ENCODE measurements at regions of chr12 and their contacts with region 1.

Region 1: DNA sequence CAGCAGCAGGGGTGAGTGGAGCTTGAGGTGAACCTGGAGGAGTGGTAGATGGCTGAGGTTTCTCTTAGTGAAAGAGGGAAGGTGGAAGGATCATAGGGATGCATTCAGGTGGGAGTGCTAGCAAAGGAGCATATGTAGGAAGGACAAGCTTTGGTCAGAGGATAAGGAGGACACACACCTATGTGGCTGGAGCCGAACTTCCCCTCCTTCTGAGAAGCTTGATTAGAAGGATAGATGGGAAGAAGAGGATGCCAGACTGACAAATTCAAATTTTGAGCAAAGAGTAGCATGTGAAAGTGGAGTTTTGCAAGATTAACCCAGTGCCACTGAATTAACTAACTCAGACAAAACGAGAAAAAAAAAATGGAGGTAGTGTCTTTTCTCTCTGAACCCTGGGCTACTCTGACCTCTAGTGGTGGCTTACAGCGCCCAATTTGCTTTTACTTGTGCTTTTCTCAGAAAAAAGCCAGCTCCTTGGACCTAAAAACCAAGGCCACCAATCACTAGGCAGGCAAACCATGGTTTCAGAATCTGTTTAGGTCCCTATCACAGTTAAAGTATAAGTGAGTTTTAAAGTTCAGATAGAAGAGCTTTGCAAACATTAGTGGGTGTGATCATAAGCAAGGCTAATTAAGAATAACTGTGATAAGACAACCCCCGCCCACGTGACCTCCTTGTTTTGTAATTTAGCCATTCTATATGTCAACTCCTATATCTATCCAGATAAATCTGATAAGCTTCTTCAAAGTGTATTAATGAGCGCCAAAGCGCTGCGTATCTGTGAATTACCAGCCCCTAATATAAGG is 15.5 kb downstream of the EMP1 start:
- DNase-seq: peak; percentile 84
- ATAC-seq: peak; percentile 72
- H3K4me3 Mint-ChIP-seq: no peak overlapping the region
- H3K27ac Mint-ChIP-seq: peak overlapping the region; percentile 60
- H3K4me1 Mint-ChIP-seq: peaks cover 55% of the 10 kb centered on the region
- H3K27me3 Mint-ChIP-seq: no peaks in the 10 kb centered on the region

Region 2: DNA sequence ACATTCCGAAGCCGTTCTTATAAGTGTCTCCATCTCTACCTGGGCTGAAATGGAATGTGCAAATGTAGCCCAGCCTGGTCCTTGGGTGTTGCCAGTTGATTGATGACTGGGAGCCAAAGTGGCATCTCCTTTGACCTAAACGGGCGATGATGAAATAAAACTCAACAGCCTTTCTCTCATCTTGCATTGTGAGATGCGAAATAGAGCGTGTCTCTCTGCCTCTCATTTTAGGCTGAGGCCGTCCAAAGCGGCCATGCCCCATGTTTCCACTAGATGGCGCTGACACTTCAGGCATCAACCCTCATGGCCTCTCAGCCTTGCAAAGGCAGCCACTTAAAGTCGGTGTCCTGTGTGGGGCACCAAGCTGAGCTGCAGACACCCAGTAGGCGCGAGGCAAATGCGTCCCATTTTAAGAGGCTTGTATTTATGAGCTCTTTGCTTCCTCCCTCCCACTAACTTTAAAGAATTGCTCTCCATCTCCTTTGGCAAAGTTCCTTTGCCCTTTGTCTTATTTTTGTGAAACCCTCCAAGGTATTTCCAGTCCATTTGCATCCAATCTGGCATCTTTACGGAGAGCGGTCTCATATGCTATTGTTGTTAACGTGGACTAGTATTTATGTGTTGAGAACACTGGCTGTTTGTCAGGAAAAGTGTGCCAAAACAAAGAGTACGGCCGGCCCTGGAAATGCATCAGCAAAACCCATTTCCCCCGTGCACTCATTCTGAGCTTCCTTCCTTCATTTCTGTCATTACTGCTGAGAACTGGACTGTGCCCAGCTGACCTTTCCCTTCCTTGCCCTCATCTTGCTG is 295.7 kb before region 1 on chr12:
- CTCF ChIA-PET with region 1: interaction called, 62 read pairs
- DNase-seq: peak; percentile 91
- ATAC-seq: peak; percentile 99
- H3K4me3 Mint-ChIP-seq: no peak overlapping the region
- H3K27ac Mint-ChIP-seq: no peak overlapping the region
- H3K4me1 Mint-ChIP-seq: peaks cover 10% of the 10 kb centered on the region
- H3K27me3 Mint-ChIP-seq: peaks cover 35% of the 10 kb centered on the region

Region 3: DNA sequence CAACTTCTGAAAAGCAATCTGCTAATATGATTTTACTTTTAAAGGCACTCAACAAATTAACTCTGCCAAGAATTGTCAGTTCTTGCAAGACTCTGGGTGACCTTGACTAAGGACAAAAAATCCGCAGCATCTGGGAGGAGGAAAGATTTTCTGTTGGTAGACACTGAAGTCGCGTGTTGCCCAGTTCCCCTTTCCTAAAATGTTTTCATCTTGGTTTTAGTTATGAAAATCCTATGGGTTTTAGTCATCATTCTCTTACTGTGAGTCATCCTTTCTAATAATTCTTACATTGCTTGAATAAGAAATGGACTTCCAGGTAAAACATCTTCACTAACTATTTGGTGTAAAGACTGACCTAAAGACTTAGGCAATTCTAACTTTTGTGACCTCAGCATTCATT is 117.7 kb before region 1 on chr12:
- CTCF ChIA-PET with region 1: interaction called, 148 read pairs
- DNase-seq: no peak
- ATAC-seq: no peak
- H3K4me3 Mint-ChIP-seq: no peak overlapping the region
- H3K27ac Mint-ChIP-seq: no peak overlapping the region
- H3K4me1 Mint-ChIP-seq: peaks cover 24% of the 10 kb centered on the region
- H3K27me3 Mint-ChIP-seq: peaks cover 12% of the 10 kb centered on the region

Region 4: DNA sequence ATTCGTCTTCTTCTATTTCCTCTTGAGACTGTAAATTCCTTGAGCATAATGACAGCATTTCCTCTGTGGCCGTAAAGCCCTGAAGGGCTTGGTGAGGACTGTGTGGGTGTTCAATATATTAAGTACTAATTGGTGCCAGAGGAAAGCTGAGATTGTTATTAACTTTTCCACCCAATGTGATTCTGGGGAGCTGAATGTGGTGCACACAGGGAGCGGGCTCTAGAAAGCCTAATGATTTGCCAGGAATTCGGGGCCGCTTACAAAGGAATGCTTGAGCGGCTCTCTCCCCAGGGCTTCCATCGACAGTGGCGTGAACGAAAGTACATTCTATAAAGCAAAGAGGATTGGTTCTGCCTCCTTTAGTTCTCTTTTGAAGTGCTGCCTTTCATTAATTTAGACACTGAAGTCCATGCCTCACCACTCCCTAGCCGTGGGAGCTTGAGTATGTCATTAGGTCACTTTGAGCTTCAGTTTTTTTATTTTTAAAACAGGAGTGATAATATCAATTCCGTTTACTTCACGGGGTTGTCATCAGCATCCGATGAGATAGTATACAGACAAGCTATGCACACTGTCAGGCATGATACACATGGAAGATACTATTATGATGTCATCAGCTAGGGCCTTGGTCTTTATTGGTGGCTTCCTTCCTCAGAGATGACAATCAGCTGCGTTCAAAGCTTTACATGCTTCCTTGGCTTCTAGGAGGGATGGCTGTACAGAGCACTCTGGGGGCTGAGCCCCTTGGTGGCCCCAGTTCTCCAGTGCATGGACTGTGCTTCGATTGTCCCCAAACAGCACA is 97.6 kb before region 1 on chr12:
- CTCF ChIA-PET with region 1: interaction called, 12 read pairs
- DNase-seq: no peak
- ATAC-seq: no peak
- H3K4me3 Mint-ChIP-seq: no peak overlapping the region
- H3K27ac Mint-ChIP-seq: no peak overlapping the region
- H3K4me1 Mint-ChIP-seq: no peaks in the 10 kb centered on the region
- H3K27me3 Mint-ChIP-seq: peaks cover 34% of the 10 kb centered on the region

Region 5: DNA sequence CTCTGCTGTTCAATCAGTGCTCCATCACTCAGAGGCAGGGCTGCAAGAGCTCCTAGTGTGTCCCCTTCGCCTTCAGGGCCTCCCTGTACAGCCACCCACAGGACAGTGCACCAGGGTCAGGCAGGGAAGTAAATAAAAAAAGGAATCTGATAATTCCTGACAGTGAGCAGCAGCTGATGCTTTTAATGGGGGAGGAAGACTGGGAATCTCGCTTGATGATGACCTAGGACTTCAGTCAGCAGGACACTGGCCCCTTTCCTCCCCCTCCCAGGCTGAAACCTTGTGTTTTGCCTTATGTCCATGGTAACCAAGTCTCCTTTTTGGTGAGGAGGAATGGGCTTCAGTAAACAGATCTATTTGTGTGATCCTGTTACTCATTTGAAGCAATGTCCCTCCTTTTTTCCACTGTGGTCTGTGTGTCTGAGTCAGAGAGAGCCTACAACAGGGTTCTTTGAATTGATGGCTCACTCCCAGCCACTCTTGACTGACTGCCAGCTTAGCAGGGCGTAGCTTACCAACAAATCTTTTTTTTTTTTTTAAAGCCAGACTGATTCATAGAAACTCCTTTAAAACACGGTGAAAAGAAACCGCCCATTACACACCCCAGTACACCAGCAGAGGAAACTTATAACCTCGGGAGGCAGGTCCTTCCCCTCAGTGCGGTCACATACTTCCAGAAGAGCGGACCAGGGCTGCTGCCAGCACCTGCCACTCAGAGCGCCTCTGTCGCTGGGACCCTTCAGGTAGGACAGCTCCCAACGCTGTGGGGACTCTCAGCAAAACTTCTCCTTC is 15.7 kb before region 1 on chr12 and contains the start of gene EMP1:
- CTCF ChIA-PET with region 1: interaction called, 22 read pairs
- DNase-seq: peak; percentile 89
- ATAC-seq: peak; percentile 95
- H3K4me3 Mint-ChIP-seq: peak within 1 kb of the TSS; percentile 78
- H3K27ac Mint-ChIP-seq: peak within 1 kb of the TSS; percentile 82
- H3K4me1 Mint-ChIP-seq: peaks cover 28% of the 10 kb centered on the region
- H3K27me3 Mint-ChIP-seq: peaks cover 35% of the 10 kb centered on the region
- total RNA-seq, gene EMP1: 6.1 to 8.8 TPM

Region 6: DNA sequence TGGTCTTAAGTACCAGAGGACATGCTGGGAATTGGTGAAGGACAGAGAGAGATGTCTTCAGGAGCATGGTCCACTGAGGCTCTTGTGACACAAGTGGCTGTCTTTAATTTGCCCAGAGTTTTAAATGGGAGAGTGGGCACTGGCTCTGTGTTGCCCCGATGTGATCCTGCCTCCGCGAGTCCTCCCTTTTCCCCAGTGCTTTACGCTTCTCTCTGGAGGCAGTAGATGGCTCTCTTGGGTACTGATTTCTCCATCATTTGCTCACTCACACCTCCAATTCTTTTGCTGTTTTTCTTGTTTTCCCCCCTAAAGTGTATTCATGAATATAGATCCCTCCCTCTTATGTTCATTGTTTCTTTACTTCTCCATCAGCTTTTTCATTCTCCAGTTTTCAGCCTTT is 58.8 kb after region 1 on chr12:
- CTCF ChIA-PET with region 1: no interaction called
- DNase-seq: no peak
- ATAC-seq: no peak
- H3K4me3 Mint-ChIP-seq: no peak overlapping the region
- H3K27ac Mint-ChIP-seq: no peak overlapping the region
- H3K4me1 Mint-ChIP-seq: no peaks in the 10 kb centered on the region
- H3K27me3 Mint-ChIP-seq: peaks cover 39% of the 10 kb centered on the region

Measured in activated CD8-positive, alpha-beta memory T cell treated with anti-CD3 and anti-CD28 coated beads, Interleukin-2, amount 10 ng/mL, durations not matched to agents 7 days and 5 days (primary cell).